ENCODE measurements at regions of chr4 and their contacts with region 1.

Region 1: DNA sequence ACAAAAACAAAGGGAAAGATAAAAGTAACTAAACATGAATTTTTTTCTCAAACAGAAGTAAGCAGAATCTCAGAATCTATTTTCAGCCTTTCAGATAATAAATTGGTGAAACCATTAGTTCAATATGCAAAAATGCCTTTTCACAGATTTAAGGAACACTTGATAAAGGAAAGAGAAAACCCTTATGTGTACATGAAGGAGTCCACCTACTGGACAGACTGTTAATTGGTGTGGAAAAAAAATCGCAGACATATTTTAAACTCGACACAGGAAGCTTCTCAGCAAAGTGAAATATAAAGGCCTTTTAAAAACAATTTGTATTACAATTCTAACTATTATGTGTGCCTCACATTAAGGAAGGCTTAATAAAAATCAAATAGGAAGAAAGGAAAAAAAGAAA is 22.3 kb downstream of the COX7B2 start:
- DNase-seq: no peak
- H3K4me3 ChIP-seq: no peak overlapping the region
- H3K27ac ChIP-seq: no peak overlapping the region
- H3K4me1 ChIP-seq: no peaks in the 10 kb centered on the region
- H3K27me3 ChIP-seq: no peaks in the 10 kb centered on the region
- CTCF ChIP-seq: peak; percentile 37 to 45

Region 2: DNA sequence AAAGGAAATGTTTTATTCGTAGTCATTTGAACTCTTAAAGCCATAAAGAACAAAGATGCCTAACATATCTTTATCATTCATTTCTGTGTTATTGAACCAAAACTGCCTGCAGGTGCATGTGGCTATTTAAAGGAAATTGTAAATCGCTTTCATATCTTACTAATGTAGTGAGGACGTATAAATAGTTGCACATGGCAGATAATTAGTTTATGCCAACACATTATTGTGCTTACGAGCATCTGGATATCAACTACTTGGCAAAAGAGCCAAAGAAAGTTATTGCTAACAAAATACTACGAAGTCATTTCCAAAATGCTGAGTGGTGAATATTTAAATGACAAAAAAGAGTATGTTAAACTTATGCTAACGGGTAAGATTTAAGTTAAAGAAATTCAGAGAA is 468.9 kb before region 1 on chr4:
- intact Hi-C with region 1: loop called (anchors 5 kb)
- DNase-seq: no peak
- H3K4me3 ChIP-seq: no peak overlapping the region
- H3K27ac ChIP-seq: no peak overlapping the region
- H3K4me1 ChIP-seq: no peaks in the 10 kb centered on the region
- H3K27me3 ChIP-seq: no peaks in the 10 kb centered on the region
- CTCF ChIP-seq: no peak

Region 3: GRCh38 chr4:46830971-46831454 is 55.7 kb before region 1 on chr4:
- intact Hi-C with region 1: loop called (anchors 5 kb)
- DNase-seq: no peak
- H3K4me3 ChIP-seq: no peak overlapping the region
- H3K27ac ChIP-seq: no peak overlapping the region
- H3K4me1 ChIP-seq: no peaks in the 10 kb centered on the region
- H3K27me3 ChIP-seq: no peaks in the 10 kb centered on the region
- CTCF ChIP-seq: no peak

Region 4: DNA sequence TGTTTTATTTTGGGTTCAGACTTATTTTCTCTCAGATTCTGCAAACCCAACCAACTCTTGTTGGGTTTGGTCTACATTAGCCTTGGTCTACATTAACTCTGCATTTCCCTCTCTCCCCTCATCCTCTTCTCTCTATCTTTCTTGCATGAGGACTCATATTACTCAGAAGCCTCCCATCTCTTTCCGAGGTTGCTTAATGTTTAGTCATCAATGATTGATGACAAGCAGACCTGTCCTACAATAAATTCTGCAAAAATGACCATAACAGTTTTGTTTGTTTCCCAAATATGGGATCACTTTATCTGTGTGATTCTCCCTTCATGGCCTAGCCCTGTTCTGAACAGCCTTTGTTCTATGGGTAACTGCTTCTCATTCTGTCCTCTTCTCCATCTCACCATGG is 219.8 kb after region 1 on chr4:
- intact Hi-C with region 1: no loop called
- DNase-seq: no peak
- H3K4me3 ChIP-seq: no peak overlapping the region
- H3K27ac ChIP-seq: no peak overlapping the region
- H3K4me1 ChIP-seq: no peaks in the 10 kb centered on the region
- H3K27me3 ChIP-seq: no peaks in the 10 kb centered on the region
- CTCF ChIP-seq: no peak